IMR-90 (cell line): ENCODE measurements at regions of chr11 and their contacts with region 1.

Region 1: GRCh38 chr11:304915-305843 is 2.4 kb upstream of the IFITM2 start:
- DNase-seq: peak; percentile 79
- ATAC-seq: peak; percentile 50
- H3K4me3 ChIP-seq: no peak overlapping the region
- H3K27ac ChIP-seq: no peak overlapping the region
- H3K4me1 ChIP-seq: peaks cover 4% of the 10 kb centered on the region
- H3K27me3 ChIP-seq: peaks cover 5% of the 10 kb centered on the region
- CTCF ChIP-seq: peak; percentile 85
- POLR2A ChIP-seq: no peak
- RAD21 ChIP-seq: peak; percentile 68

Region 2: DNA sequence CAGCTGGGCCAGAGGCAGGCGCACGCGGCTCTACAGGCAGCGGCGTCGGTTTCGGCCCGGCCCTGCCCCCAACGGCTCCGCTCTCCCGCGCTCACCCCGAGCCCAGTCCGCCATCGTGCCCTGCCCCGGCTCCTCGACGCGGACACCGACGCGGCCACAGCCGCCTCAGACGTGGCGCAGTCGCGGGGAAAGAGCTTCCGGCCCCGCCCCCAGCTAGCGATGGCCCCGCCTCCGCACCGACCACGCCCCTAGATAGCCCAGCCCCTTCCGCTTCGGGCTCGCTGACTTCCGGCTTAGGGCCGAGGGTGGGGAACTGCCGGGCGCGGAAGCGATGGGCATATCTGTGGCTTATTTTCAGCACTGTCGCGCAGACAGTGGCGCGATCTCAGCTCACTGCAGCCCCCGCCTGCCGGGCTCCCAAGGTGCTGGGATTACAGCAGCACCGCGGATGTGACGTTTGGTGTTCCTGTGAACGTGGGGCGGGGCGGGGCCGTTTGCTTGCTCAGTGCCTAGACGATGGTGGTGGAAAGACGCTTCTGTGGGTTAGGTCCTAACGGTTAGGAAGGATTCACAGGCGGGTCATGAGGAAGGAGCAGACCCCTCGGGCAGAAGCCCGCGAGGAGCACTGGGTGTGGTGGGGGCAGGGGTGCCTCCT is 97.8 kb before region 1 on chr11 and contains the starts of genes BET1L and RIC8A:
- CTCF ChIA-PET with region 1: interaction called, 3 read pairs
- POLR2A ChIA-PET with region 1: no interaction called
- dilution Hi-C with region 1: no loop called
- in situ Hi-C with region 1: no loop called
- intact Hi-C with region 1: loop called (anchors 5 kb)
- DNase-seq: peak; percentile 99
- ATAC-seq: peak; percentile 76
- H3K4me3 ChIP-seq: peak within 1 kb of the TSS; percentile 70
- H3K27ac ChIP-seq: peak within 1 kb of the TSS; percentile 88
- H3K4me1 ChIP-seq: peaks cover 25% of the 10 kb centered on the region
- H3K27me3 ChIP-seq: no peaks in the 10 kb centered on the region
- CTCF ChIP-seq: no peak
- POLR2A ChIP-seq: peak; percentile 96
- RAD21 ChIP-seq: no peak
- total RNA-seq, gene BET1L: 10.0 and 10.8 TPM in 2 replicates
- total RNA-seq, gene RIC8A: 114 and 129 TPM in 2 replicates

Region 3: GRCh38 chr11:288328-289144 is 16.6 kb before region 1 on chr11 and contains the start of gene PGGHG:
- CTCF ChIA-PET with region 1: no interaction called
- POLR2A ChIA-PET with region 1: interaction called, 12 read pairs
- dilution Hi-C with region 1: no loop called
- in situ Hi-C with region 1: no loop called
- intact Hi-C with region 1: no loop called
- DNase-seq: no peak
- ATAC-seq: peak; percentile 96
- H3K4me3 ChIP-seq: peak within 1 kb of the TSS; percentile 67
- H3K27ac ChIP-seq: no peak within 1 kb of the TSS; the same call in 1 of the 2 replicates
- H3K4me1 ChIP-seq: peaks cover 4% of the 10 kb centered on the region; the same call in 1 of the 2 replicates
- H3K27me3 ChIP-seq: peaks cover 21% of the 10 kb centered on the region
- CTCF ChIP-seq: no peak
- POLR2A ChIP-seq: no peak
- RAD21 ChIP-seq: no peak
- total RNA-seq, gene PGGHG: 1.4 and 1.8 TPM in 2 replicates

Region 4: GRCh38 chr11:355581-356458 is 50.6 kb after region 1 on chr11:
- CTCF ChIA-PET with region 1: interaction called, 3 read pairs
- POLR2A ChIA-PET with region 1: interaction called, 4 read pairs
- dilution Hi-C with region 1: no loop called
- in situ Hi-C with region 1: loop called (anchors 10 kb)
- intact Hi-C with region 1: no loop called
- DNase-seq: peak; percentile 94
- ATAC-seq: peak; percentile 93
- H3K4me3 ChIP-seq: peak overlapping the region; percentile 36; the same call in 1 of the 2 replicates
- H3K27ac ChIP-seq: peak overlapping the region; percentile 99
- H3K4me1 ChIP-seq: peaks cover 8% of the 10 kb centered on the region
- H3K27me3 ChIP-seq: peaks cover 8% of the 10 kb centered on the region
- CTCF ChIP-seq: no peak
- POLR2A ChIP-seq: peak; percentile 42; the same call in 1 of the 2 replicates
- RAD21 ChIP-seq: no peak; the same call in 1 of the 2 replicates

Region 5: DNA sequence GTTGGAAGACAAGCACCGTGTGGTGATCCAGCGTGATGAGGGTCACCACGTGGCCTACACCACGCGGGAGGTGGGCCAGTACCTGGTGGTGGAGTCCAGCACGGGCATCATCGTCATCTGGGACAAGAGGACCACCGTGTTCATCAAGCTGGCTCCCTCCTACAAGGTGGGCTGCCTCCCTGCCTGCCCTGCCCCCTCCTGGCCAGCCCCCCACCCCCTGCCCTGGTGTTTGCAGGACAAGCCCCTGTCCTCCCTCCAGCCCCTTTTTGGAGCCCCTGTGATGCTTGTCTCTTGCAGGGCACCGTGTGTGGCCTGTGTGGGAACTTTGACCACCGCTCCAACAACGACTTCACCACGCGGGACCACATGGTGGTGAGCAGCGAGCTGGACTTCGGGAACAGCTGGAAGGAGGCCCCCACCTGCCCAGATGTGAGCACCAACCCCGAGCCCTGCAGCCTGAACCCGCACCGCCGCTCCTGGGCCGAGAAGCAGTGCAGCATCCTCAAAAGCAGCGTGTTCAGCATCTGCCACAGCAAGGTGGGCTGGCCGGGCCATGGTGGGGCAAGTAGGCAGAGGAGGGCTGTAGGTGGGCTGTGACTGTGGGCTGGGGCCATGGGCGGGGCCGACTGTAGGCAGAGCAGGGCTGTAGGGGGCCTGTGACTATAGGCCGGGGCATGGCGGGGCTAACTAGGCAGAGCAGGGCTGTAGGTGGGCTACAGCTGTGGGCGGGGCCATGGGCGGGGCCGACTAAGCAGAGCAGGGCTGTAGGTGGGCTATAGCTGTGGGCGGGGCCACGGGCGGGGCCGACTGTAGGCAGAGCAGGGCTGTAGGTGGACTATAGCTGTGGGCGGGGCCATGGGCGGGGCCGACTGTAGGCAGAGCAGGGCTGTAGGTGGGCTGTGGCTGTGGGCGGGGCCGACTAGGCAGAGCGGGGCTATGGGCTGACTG is 783.1 kb after region 1 on chr11:
- CTCF ChIA-PET with region 1: no interaction called
- POLR2A ChIA-PET with region 1: no interaction called
- dilution Hi-C with region 1: no loop called
- in situ Hi-C with region 1: no loop called
- intact Hi-C with region 1: no loop called
- DNase-seq: no peak
- ATAC-seq: no peak
- H3K4me3 ChIP-seq: no peak overlapping the region
- H3K27ac ChIP-seq: no peak overlapping the region
- H3K4me1 ChIP-seq: no peaks in the 10 kb centered on the region
- H3K27me3 ChIP-seq: no peaks in the 10 kb centered on the region; the same call in 1 of the 2 replicates
- CTCF ChIP-seq: no peak
- POLR2A ChIP-seq: no peak
- RAD21 ChIP-seq: no peak